Natural killer cell (primary cell): ENCODE measurements at regions of chr1 and their contacts with region 1.

Region 1: DNA sequence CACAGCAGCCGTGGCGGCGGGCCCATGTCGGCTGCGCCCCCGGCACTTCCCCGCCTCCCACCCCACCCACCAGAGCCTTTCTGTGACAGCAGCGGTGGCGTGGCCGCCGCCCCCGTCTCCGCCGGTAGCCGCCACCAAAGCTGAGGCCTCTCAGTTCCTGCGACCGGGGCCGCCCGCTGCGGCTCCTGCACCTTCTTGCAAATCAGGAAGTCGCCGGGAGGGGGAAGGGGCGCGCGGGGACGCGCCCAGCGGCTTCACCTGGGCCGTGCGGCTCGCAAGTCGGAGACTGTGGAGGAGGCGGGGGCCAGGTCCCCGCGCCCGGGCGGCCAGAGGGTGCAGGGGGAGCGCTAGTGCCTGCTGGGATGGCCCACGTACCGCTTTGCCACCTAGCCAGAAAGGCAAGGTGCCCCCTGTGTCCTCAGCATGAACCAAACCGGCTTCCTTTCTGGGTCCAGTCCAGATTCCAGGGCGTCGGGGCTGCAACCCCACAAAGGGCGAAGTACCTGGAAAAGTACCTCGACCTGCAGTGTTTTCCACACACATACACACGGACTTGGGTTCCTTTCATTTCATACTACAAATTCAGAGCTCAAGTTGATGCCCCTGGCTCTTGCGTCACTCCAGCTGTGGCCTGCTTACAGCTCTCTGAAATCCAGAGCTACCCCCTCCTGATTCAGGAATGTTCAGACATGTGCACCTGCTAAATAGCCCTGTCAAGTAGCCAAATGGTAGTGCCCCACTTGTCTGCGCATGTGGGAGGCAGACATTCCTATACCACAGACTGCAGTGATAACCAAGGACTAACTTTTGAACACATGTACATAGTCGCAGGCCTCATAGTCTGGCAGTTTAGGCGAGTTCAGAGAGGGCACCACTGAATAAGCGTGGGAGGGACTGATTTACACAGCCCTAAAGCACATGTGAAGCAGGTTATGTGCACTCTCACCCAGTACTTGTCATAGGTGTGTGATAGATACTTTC is at the start of gene DENND1B:
- DNase-seq: peak; percentile 71 to 89
- ATAC-seq: peak; percentile 47 to 81 (median 77)
- H3K4me3 ChIP-seq: peak within 1 kb of the TSS; percentile 82
- H3K4me3 Mint-ChIP-seq: peak within 1 kb of the TSS; percentile 91
- H3K27ac ChIP-seq: peak within 1 kb of the TSS; percentile 97
- H3K27ac Mint-ChIP-seq: peak within 1 kb of the TSS; percentile 89 to 99
- H3K4me1 ChIP-seq: peaks cover 16% of the 10 kb centered on the region
- H3K4me1 Mint-ChIP-seq: peaks cover 59 to 61% of the 10 kb centered on the region in 2 donors
- H3K27me3 ChIP-seq: no peaks in the 10 kb centered on the region
- H3K27me3 Mint-ChIP-seq: no peaks in the 10 kb centered on the region
- CTCF ChIP-seq: no peak
- total RNA-seq, gene DENND1B: 35.4 to 62.5 (median 37.5) TPM

Region 2: GRCh38 chr1:197715806-197716205 is 59.8 kb before region 1 on chr1:
- intact Hi-C with region 1: no loop called
- DNase-seq: no peak
- ATAC-seq: no peak
- H3K4me3 ChIP-seq: no peak overlapping the region
- H3K4me3 Mint-ChIP-seq: no peak overlapping the region
- H3K27ac ChIP-seq: no peak overlapping the region
- H3K27ac Mint-ChIP-seq: no peak overlapping the region
- H3K4me1 ChIP-seq: no peaks in the 10 kb centered on the region
- H3K4me1 Mint-ChIP-seq: peaks cover 0 to 15% of the 10 kb centered on the region in 2 donors
- H3K27me3 ChIP-seq: no peaks in the 10 kb centered on the region
- H3K27me3 Mint-ChIP-seq: no peaks in the 10 kb centered on the region
- CTCF ChIP-seq: no peak

Region 3: DNA sequence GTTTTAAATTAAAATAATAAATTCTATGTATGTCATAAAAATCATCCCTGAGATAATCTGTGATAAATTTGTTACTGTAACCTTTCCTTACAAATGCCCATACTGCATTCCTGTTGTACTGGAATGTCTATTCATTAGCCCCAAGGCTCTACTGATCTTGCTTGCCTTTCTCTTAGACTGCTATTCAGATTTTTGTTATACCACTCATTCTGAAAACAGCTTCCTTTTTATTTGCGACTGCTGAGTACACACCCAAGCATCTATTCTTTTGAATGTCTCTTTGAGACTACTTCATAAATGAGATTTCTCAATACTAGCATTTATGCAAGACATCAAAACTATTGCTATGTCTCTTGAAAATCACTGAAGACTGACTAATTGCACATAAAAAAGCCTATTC is 38.9 kb before region 1 on chr1:
- intact Hi-C with region 1: loop called (anchors 5 kb)
- DNase-seq: no peak
- ATAC-seq: no peak
- H3K4me3 ChIP-seq: no peak overlapping the region
- H3K4me3 Mint-ChIP-seq: no peak overlapping the region
- H3K27ac ChIP-seq: no peak overlapping the region
- H3K27ac Mint-ChIP-seq: peak overlapping the region in 1 of 2 donors; percentile 1
- H3K4me1 ChIP-seq: peaks cover 4% of the 10 kb centered on the region
- H3K4me1 Mint-ChIP-seq: peaks cover 55 to 61% of the 10 kb centered on the region in 2 donors
- H3K27me3 ChIP-seq: no peaks in the 10 kb centered on the region
- H3K27me3 Mint-ChIP-seq: no peaks in the 10 kb centered on the region
- CTCF ChIP-seq: no peak

Region 4: GRCh38 chr1:197808880-197809279 is 33.3 kb after region 1 on chr1:
- intact Hi-C with region 1: loop called (anchors 2 kb)
- DNase-seq: peak in 1 of 2 donors; percentile 6
- ATAC-seq: peak; percentile 86 to 88 (median 86)
- H3K4me3 ChIP-seq: no peak overlapping the region
- H3K4me3 Mint-ChIP-seq: peak overlapping the region; percentile 19
- H3K27ac ChIP-seq: no peak overlapping the region
- H3K27ac Mint-ChIP-seq: peak overlapping the region; percentile 55 to 80
- H3K4me1 ChIP-seq: peaks cover 15% of the 10 kb centered on the region
- H3K4me1 Mint-ChIP-seq: peaks cover 33 to 34% of the 10 kb centered on the region in 2 donors
- H3K27me3 ChIP-seq: no peaks in the 10 kb centered on the region
- H3K27me3 Mint-ChIP-seq: no peaks in the 10 kb centered on the region
- CTCF ChIP-seq: no peak

Region 5: GRCh38 chr1:197902454-197903195 is 127.1 kb after region 1 on chr1 and contains the start of gene C1orf53:
- intact Hi-C with region 1: loop called (anchors 2 kb)
- DNase-seq: peak; percentile 76 to 86
- ATAC-seq: peak; percentile 92 to 94 (median 93)
- H3K4me3 ChIP-seq: peak within 1 kb of the TSS; percentile 76
- H3K4me3 Mint-ChIP-seq: peak within 1 kb of the TSS; percentile 85
- H3K27ac ChIP-seq: peak within 1 kb of the TSS; percentile 73
- H3K27ac Mint-ChIP-seq: peak within 1 kb of the TSS; percentile 45 to 74
- H3K4me1 ChIP-seq: peaks cover 6% of the 10 kb centered on the region
- H3K4me1 Mint-ChIP-seq: peaks cover 14 to 16% of the 10 kb centered on the region in 2 donors
- H3K27me3 ChIP-seq: peaks cover 23% of the 10 kb centered on the region
- H3K27me3 Mint-ChIP-seq: peaks cover 33 to 56% of the 10 kb centered on the region in 2 donors
- CTCF ChIP-seq: no peak
- total RNA-seq, gene C1orf53: not detected

Region 6: GRCh38 chr1:197984289-197984688 is 208.7 kb after region 1 on chr1:
- intact Hi-C with region 1: no loop called
- DNase-seq: no peak
- ATAC-seq: no peak
- H3K4me3 ChIP-seq: no peak overlapping the region
- H3K4me3 Mint-ChIP-seq: no peak overlapping the region
- H3K27ac ChIP-seq: no peak overlapping the region
- H3K27ac Mint-ChIP-seq: no peak overlapping the region
- H3K4me1 ChIP-seq: no peaks in the 10 kb centered on the region
- H3K4me1 Mint-ChIP-seq: peaks cover 5 to 9% of the 10 kb centered on the region in 2 donors
- H3K27me3 ChIP-seq: peaks cover 3% of the 10 kb centered on the region
- H3K27me3 Mint-ChIP-seq: peaks cover 10 to 12% of the 10 kb centered on the region in 2 donors
- CTCF ChIP-seq: no peak

Region 7: GRCh38 chr1:199173356-199173755 is 1397.8 kb after region 1 on chr1:
- intact Hi-C with region 1: loop called (anchors 5 kb)
- DNase-seq: peak in 1 of 2 donors; percentile 77
- ATAC-seq: peak; percentile 77 to 92 (median 89)
- H3K4me3 ChIP-seq: no peak overlapping the region
- H3K4me3 Mint-ChIP-seq: peak overlapping the region; percentile 49
- H3K27ac ChIP-seq: peak overlapping the region; percentile 90
- H3K27ac Mint-ChIP-seq: peak overlapping the region; percentile 88 to 94
- H3K4me1 ChIP-seq: peaks cover 37% of the 10 kb centered on the region
- H3K4me1 Mint-ChIP-seq: peaks cover 65 to 78% of the 10 kb centered on the region in 2 donors
- H3K27me3 ChIP-seq: no peaks in the 10 kb centered on the region
- H3K27me3 Mint-ChIP-seq: no peaks in the 10 kb centered on the region
- CTCF ChIP-seq: no peak